K562 (cell line): ENCODE measurements at regions of chr6 and their contacts with region 1.

Region 1: GRCh38 chr6:24689964-24690363 is 23.1 kb downstream of the ACOT13 start:
- DNase-seq: no peak
- ATAC-seq: no peak
- H3K4me3 ChIP-seq: no peak overlapping the region
- H3K27ac ChIP-seq: no peak overlapping the region
- H3K4me1 ChIP-seq: no peaks in the 10 kb centered on the region
- H3K27me3 ChIP-seq: no peaks in the 10 kb centered on the region
- CTCF ChIP-seq: no peak
- EP300 ChIP-seq: no peak
- POLR2A ChIP-seq: no peak
- RAD21 ChIP-seq: no peak

Region 2: DNA sequence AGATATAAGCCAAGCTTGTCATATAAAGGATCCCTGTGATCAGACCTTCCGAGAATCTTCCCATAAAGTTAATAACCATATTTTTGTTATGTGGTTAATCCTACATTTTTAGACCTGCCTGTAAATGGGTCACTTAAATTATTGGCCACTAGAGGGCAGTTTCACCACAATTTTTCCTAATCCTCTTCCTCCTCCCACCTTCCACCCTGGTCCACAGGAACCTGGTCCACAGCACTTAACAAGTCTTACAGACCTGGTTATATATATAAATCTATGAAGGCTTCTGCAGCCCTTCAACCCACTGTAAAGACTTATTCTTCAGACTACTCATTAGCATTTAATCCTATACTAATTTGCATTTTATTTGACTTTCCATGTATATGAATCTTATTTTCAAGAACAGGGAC is 258.9 kb before region 1 on chr6:
- CTCF ChIA-PET with region 1: interaction called, 4 read pairs
- POLR2A ChIA-PET with region 1: no interaction called
- in situ Hi-C with region 1: no loop called
- intact Hi-C with region 1: loop called (anchors 2 kb)
- DNase-seq: peak; percentile 67 to 71 (median 68)
- ATAC-seq: peak; percentile 90
- H3K4me3 ChIP-seq: no peak overlapping the region
- H3K27ac ChIP-seq: no peak overlapping the region
- H3K4me1 ChIP-seq: peaks cover 0 to 8% of the 10 kb centered on the region in 2 experiments; a peak in 3 of 5 replicates
- H3K27me3 ChIP-seq: no peaks in the 10 kb centered on the region
- CTCF ChIP-seq: peak; percentile 65 to 84 (median 77)
- EP300 ChIP-seq: no peak
- POLR2A ChIP-seq: no peak
- RAD21 ChIP-seq: peak; percentile 36 to 74; a peak in 3 of 4 replicates

Region 3: GRCh38 chr6:26156076-26156849 is 1466.3 kb after region 1 on chr6:
- CTCF ChIA-PET with region 1: no interaction called
- POLR2A ChIA-PET with region 1: no interaction called
- in situ Hi-C with region 1: no loop called
- intact Hi-C with region 1: no loop called
- DNase-seq: peak; percentile 96 to 97 (median 97)
- ATAC-seq: peak; percentile 78
- H3K4me3 ChIP-seq: peak overlapping the region; percentile 65
- H3K27ac ChIP-seq: peak overlapping the region; percentile 85
- H3K4me1 ChIP-seq: peaks cover 12 to 18% of the 10 kb centered on the region in 2 experiments; a peak in 4 of 5 replicates
- H3K27me3 ChIP-seq: no peaks in the 10 kb centered on the region
- CTCF ChIP-seq: no peak
- EP300 ChIP-seq: peak; percentile 29
- POLR2A ChIP-seq: peak; percentile 100
- RAD21 ChIP-seq: 0 out of 4 replicates have a peak, but pooled peaks of 1 of the 2 experiments have one; percentile 21